PC-9 (cell line): ENCODE measurements at regions of chr14 and their contacts with region 1.

Region 1: DNA sequence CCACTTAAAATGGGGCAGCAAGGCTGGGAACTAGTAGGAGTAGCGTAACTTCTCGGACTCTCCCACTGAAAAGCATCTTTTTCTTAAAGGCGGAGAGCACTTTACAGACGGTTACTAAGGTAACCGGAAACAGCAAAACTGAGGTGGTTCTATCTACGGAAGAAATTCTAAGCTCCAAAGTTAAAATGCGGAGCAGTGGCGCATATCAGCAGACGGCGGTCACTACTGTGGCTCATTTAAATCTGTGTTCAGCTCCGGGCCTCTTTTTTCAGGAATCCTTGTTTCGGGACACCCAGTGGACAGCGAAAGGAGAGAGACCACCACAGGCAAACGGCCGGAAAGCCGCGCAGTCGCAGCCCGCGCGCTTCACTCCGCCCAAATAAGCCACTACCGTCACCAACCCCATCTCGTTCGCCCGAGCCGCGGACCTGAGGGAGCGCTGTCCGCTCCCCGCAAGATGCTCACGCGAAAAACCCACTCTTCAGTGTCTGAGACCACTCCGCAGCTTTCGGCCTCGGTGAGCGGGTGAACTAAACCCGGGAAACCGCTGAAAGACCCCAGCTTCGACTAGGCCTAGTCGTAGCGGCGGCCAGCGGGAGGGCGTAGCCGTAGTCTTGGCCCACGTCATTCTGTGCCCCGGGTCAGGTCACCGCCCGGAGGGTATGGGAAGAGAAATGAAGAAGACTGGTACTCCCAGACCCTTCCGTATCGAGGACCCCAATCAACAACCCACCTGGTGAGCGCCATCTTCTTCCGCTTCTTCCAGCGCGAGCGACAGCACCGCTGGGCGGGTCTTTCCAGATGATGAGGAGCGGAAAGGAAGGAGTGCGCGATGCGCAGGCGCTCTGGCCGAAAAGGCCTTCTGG is at the start of gene SNW1:
- DNase-seq: peak; percentile 96
- H3K4me3 ChIP-seq: peak within 1 kb of the TSS; percentile 81
- H3K27ac ChIP-seq: peak within 1 kb of the TSS; percentile 38
- H3K4me1 ChIP-seq: peaks cover 21% of the 10 kb centered on the region
- H3K27me3 ChIP-seq: no peaks in the 10 kb centered on the region
- CTCF ChIP-seq: no peak
- total RNA-seq, gene SNW1: 154 and 233 TPM in 2 replicates

Region 2: DNA sequence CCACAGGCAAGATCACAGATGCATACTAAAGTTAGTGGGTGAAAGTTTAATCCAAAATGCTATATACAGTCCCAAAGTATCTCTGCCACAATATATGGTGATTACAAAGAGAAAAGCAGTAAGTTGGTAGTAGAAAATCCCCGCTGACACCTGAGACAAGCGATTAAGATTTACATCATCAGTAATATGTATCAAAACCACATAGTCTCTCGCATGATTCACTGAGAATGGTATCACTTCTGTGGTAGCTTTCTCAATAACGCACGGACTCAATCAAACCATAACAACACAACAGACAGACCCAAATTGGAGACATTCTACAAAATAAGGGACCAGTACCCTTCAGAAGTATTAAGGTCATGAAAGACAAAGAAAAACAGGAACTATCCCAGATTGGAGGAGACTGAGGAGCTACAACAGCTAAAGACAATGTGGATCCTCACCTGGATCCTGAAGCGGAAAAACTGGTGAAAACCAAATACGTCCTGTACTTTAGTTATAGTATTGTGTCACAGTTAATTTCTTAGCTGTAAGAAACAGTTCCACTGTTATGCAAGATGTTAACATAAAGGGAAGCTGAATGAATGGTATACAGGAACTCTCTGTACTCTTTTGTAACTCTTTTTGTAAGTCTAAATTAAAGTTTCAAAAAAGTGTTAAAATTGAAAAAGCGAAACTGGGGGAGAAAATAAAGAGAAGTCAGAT is 195.2 kb before region 1 on chr14:
- CTCF ChIA-PET with region 1: interaction called, 10 read pairs
- POLR2A ChIA-PET with region 1: no interaction called
- intact Hi-C with region 1: no loop called
- DNase-seq: no peak
- H3K4me3 ChIP-seq: no peak overlapping the region
- H3K27ac ChIP-seq: 0 out of 2 replicates have a peak overlapping the region, but pooled peaks have one; percentile 7
- H3K4me1 ChIP-seq: no peaks in the 10 kb centered on the region
- H3K27me3 ChIP-seq: no peaks in the 10 kb centered on the region
- CTCF ChIP-seq: no peak

Region 3: GRCh38 chr14:77782202-77782601 is 21.6 kb after region 1 on chr14:
- CTCF ChIA-PET with region 1: no interaction called
- POLR2A ChIA-PET with region 1: interaction called, 10 read pairs
- intact Hi-C with region 1: no loop called
- DNase-seq: no peak
- H3K4me3 ChIP-seq: no peak overlapping the region
- H3K27ac ChIP-seq: no peak overlapping the region
- H3K4me1 ChIP-seq: 0 out of 2 replicates have a peak, but pooled peaks cover under 1% of the 10 kb centered on the region
- H3K27me3 ChIP-seq: no peaks in the 10 kb centered on the region
- CTCF ChIP-seq: no peak

Region 4: GRCh38 chr14:77812028-77812427 is 51.4 kb after region 1 on chr14:
- CTCF ChIA-PET with region 1: interaction called, 3 read pairs
- POLR2A ChIA-PET with region 1: interaction called, 5 read pairs
- intact Hi-C with region 1: loop called (anchors 1 kb)
- DNase-seq: no peak
- H3K4me3 ChIP-seq: no peak overlapping the region
- H3K27ac ChIP-seq: no peak overlapping the region
- H3K4me1 ChIP-seq: no peaks in the 10 kb centered on the region
- H3K27me3 ChIP-seq: no peaks in the 10 kb centered on the region
- CTCF ChIP-seq: no peak

Region 5: GRCh38 chr14:78598041-78598920 is 837.7 kb after region 1 on chr14:
- CTCF ChIA-PET with region 1: no interaction called
- POLR2A ChIA-PET with region 1: no interaction called
- intact Hi-C with region 1: loop called (anchors 5 kb)
- DNase-seq: peak in 1 of 2 experiments; percentile 29
- H3K4me3 ChIP-seq: no peak overlapping the region
- H3K27ac ChIP-seq: no peak overlapping the region
- H3K4me1 ChIP-seq: no peaks in the 10 kb centered on the region
- H3K27me3 ChIP-seq: no peaks in the 10 kb centered on the region
- CTCF ChIP-seq: peak; percentile 89